Activated naive CD4-positive, alpha-beta T cell treated with anti-CD3 and anti-CD28 coated beads for 36 hours (primary cell): ENCODE measurements at regions of chr20 and their contacts with region 1.

Region 1: DNA sequence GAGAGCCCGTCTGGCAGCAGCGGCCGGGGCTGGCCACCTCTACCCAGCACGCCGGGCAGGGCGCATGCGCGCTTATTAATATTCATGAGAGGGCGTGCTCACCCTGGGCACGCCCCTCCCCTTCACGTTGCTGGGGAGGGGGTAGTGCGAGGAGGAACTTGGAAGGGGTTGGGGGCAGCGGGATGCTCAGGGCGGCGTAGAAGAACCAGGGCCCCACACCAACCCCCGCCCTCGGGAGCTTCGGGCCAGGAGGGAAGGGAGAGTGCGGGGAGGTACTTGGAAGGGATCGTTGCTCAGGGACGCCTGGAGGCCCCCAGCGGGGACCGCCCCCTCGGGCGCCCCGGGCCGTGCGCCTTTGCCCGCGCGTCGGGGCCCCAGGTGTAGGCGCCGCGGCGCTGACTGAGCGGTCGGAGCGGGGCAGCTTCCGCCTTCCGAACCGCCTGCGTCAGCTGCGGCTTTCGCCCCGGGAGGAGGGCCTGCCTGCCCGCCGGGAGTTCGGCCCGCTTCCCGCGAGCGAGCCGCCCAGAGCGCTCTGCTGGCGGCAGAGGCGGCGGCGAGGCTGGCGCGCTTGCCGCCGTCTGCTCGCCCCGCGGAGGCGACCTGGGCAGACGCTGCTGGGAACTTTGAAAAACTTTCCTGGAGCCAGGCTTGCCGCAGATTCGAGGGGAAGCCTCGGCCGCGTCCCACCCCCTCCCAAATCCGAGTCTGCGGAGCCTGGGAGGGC is at the start of gene JAG1:
- DNase-seq: peak; percentile 69
- H3K4me3 Mint-ChIP-seq: peak within 1 kb of the TSS; percentile 78
- H3K27ac Mint-ChIP-seq: no peak within 1 kb of the TSS
- H3K4me1 Mint-ChIP-seq: peaks cover 21% of the 10 kb centered on the region
- H3K27me3 Mint-ChIP-seq: peaks cover 60% of the 10 kb centered on the region
- total RNA-seq, gene JAG1: 0.25 to 0.41 TPM

Region 2: GRCh38 chr20:10357974-10358373 is 316.2 kb before region 1 on chr20:
- CTCF ChIA-PET with region 1: no interaction called
- intact Hi-C with region 1: loop called (anchors 5 kb)
- DNase-seq: no peak
- H3K4me3 Mint-ChIP-seq: no peak overlapping the region
- H3K27ac Mint-ChIP-seq: no peak overlapping the region
- H3K4me1 Mint-ChIP-seq: peaks cover 3% of the 10 kb centered on the region
- H3K27me3 Mint-ChIP-seq: peaks cover 9% of the 10 kb centered on the region

Region 3: GRCh38 chr20:10558635-10559187 is 115.4 kb before region 1 on chr20:
- CTCF ChIA-PET with region 1: interaction called, 3 read pairs
- intact Hi-C with region 1: loop called (anchors 1 kb)
- DNase-seq: peak; percentile 77
- H3K4me3 Mint-ChIP-seq: no peak overlapping the region
- H3K27ac Mint-ChIP-seq: peak overlapping the region; percentile 42
- H3K4me1 Mint-ChIP-seq: peaks cover 15% of the 10 kb centered on the region
- H3K27me3 Mint-ChIP-seq: no peaks in the 10 kb centered on the region

Region 4: DNA sequence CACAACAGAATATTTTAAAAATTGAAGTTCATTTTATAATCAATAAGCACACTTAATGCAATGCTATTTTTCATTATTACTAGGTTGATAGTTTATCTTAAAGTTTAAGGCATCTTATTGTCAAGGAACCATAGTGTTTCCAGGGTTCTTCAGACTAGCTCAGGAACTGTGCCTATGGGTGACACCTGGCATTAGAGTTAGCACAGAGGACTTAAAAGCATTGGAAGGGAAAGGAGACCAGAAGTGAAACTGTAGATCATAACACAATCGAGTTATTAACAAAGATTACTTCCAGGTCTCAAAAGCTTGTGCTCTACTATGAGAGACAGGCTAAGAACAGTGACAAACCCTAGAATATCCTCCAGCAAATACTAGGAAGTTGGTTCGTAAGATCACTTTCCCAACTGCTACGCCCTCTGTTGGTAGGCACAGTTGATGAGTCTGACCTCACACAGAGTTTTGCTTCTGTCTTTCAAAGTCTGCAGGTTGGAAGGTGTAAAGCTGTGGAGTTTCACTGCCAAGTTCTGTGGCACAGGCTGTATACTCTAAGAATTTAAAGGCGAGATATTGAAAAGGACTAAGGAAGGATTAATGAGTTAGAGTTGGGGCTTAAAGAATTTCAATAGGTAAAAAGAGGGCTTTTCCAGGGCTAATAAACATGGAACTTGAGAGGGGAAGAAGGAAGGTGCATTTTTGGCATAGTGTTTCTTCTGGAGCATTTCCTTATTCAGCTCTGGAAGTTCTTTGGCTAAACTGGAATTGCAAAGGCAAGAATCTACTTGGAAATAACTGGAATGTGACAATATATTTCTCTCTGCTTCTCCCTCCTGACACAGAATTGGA is 531.0 kb after region 1 on chr20:
- CTCF ChIA-PET with region 1: no interaction called
- intact Hi-C with region 1: loop called (anchors 5 kb)
- DNase-seq: peak; percentile 43
- H3K4me3 Mint-ChIP-seq: no peak overlapping the region
- H3K27ac Mint-ChIP-seq: no peak overlapping the region
- H3K4me1 Mint-ChIP-seq: no peaks in the 10 kb centered on the region
- H3K27me3 Mint-ChIP-seq: no peaks in the 10 kb centered on the region

Region 5: GRCh38 chr20:11890331-11891080 is 1216.4 kb after region 1 on chr20:
- CTCF ChIA-PET with region 1: no interaction called
- intact Hi-C with region 1: loop called (anchors 5 kb)
- DNase-seq: peak; percentile 67
- H3K4me3 Mint-ChIP-seq: peak overlapping the region; percentile 73
- H3K27ac Mint-ChIP-seq: peak overlapping the region; percentile 50
- H3K4me1 Mint-ChIP-seq: peaks cover 21% of the 10 kb centered on the region
- H3K27me3 Mint-ChIP-seq: peaks cover 25% of the 10 kb centered on the region